ENCODE measurements at regions of chr13 and their contacts with region 1.

Region 1: DNA sequence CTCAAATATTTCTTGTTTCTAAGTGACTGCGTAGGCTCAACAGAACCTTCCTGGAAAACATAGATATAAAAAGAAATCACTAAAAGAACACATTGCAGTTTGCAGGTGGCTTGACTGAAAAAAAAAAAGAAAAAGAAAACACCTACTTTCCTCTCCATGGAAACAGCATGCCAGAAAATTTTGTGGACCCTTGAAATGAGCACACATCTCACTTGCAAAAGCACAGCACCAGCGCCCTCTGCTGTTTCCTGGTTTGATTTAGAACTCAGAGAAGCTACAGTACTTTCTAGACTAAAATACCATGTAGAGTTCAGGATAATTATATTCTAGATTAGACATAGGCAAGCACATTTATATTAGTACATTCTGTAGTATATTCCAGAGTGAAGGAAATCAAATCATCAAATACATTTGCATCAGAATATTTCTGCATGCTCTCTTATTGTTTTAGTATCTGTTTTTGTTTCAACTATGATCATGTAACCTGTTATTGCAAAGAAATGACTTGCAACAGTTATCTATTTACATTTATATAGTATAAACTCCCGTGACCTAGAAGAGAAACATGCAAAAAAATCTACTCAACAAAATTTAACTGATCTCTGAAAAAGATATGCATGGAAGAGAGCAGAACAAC is 22.3 kb upstream of the XPO4 start:
- DNase-seq: peak; percentile 79
- ATAC-seq: peak; percentile 86
- H3K4me3 ChIP-seq: no peak overlapping the region
- H3K27ac ChIP-seq: no peak overlapping the region
- H3K4me1 ChIP-seq: no peaks in the 10 kb centered on the region
- H3K27me3 ChIP-seq: no peaks in the 10 kb centered on the region
- CTCF ChIP-seq: peak; percentile 76

Region 2: DNA sequence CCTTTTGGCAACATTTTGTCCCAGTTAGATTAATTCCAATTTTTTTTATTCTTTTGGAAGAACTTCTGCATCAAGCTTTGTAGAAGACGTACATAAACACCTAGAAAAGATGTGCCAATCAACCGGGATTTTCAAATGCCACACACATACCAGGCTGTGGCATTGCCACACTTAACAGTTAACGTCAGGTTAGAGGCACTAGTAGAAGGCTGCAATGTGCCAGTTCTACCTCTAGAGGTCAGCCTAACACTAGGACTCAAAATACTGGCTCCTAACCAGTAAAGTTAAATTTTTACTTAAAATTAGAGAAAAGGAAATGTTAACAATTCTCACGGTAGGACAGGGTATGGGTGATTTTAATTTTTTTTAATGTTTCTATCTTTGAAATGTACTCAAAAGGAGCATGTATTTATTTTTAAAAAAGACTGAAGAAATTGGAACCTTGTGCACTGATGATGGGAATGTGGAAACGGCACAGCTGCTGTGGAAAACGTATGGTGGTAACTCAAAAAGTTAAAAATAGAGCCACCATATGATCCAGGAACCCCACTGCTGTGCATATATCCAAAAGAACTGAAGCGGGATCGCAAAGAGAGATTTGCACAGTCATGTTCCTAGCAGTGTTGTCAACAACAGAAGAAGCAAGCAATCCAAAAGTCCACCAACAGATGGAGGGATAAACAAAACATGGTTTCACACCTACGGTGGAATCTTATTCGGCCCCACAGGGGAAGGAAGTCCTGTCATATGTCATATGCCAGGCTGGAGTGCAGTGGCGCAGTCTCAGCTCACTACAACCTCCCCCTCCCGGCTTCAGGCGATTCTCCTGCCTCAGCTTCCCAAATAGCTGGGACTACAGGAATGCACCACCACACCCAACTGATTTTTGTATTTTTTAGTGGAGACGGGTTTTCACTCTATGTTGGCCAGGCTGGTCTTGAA is 429.5 kb before region 1 on chr13:
- intact Hi-C with region 1: loop called (anchors 10 kb)
- DNase-seq: no peak
- ATAC-seq: peak; percentile 95
- H3K4me3 ChIP-seq: peak overlapping the region; percentile 17
- H3K27ac ChIP-seq: no peak overlapping the region
- H3K4me1 ChIP-seq: peaks cover 7% of the 10 kb centered on the region
- H3K27me3 ChIP-seq: no peaks in the 10 kb centered on the region
- CTCF ChIP-seq: peak; percentile 97

Region 3: DNA sequence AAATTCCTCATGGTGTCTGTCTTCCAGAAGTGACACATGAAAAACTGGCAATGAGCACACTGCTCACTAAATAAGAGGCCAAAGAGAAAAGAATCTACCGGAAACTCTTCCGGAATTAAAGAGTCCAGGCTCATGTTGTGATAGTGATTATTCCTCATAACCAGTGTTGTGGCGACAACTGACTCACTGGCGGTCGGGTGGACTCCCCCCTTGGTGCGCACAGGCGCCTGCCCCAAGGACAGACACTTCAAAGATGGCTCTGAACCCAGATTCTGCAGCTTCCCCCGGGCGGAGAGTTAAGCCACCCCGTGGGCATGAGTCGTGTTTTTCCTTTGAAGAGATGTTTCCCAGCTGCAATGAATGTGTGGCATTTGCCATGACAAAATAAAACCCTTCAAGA is 211.1 kb before region 1 on chr13:
- intact Hi-C with region 1: loop called (anchors 5 kb)
- DNase-seq: no peak
- ATAC-seq: no peak
- H3K4me3 ChIP-seq: no peak overlapping the region
- H3K27ac ChIP-seq: peak overlapping the region; percentile 6
- H3K4me1 ChIP-seq: peaks cover 3% of the 10 kb centered on the region
- H3K27me3 ChIP-seq: no peaks in the 10 kb centered on the region
- CTCF ChIP-seq: no peak

Measured in upper lobe of right lung (tissue), 1 donor.